ENCODE measurements at regions of chr1 and their contacts with region 1.

Region 1: DNA sequence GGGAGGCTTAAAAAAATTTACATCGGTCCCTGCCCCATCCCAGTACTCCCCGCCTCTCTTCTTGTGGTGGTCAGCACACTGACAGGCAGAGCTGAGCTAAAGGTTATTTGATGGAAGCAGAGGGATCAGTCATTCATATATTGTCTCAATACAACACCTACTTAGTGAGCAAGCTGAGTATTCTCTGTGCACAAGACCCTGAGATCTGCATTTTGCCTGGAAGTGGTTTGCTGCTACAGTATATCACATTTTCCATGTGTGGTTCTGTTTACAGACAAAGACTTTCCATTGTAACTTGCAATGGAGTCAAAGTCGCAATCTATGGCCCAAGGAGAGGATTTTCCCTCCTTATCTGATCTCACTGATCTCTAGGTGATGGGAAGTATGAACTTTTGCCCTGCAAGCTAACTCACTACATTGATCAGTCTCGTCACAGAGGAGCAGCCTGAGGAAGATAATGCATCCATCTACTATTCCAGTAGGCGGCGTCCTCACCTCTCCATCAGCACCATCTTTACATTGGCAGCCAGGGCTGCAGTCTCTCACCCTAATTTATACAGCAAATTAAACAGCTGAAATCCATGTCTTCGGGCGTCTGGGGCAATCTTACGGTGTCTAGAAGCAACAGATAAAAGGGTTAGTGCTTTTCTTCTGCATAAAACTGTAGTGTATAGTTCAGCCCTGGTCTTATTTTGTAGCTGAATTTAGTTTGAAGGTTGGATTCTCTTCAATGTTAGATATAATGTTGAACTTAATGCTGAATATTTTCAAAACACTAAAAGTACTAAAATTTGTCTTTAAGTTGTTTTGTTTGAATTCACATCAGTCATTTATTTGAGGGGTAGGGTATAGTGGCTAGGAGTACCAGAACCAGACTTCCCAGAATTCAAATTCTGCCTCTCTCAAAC is 3.2 kb upstream of the TRAF5 start:
- DNase-seq: peak; percentile 75
- H3K4me3 ChIP-seq: no peak overlapping the region; a peak in 1 of 4 replicates
- H3K27ac ChIP-seq: no peak overlapping the region
- H3K4me1 ChIP-seq: peaks cover 0 to 15% of the 10 kb centered on the region in 2 experiments; a peak in 1 of 4 replicates
- H3K27me3 ChIP-seq: no peaks in the 10 kb centered on the region
- CTCF ChIP-seq: peak; percentile 87
- EP300 ChIP-seq: no peak
- RAD21 ChIP-seq: peak; percentile 94

Region 2: GRCh38 chr1:211309617-211310016 is 13.8 kb before region 1 on chr1:
- CTCF ChIA-PET with region 1: interaction called, 20 read pairs
- POLR2A ChIA-PET with region 1: no interaction called
- DNase-seq: no peak
- H3K4me3 ChIP-seq: no peak overlapping the region
- H3K27ac ChIP-seq: no peak overlapping the region
- H3K4me1 ChIP-seq: peaks cover 0 to 7% of the 10 kb centered on the region in 2 experiments; a peak in 1 of 4 replicates
- H3K27me3 ChIP-seq: no peaks in the 10 kb centered on the region
- CTCF ChIP-seq: no peak
- EP300 ChIP-seq: no peak
- RAD21 ChIP-seq: no peak

Region 3: DNA sequence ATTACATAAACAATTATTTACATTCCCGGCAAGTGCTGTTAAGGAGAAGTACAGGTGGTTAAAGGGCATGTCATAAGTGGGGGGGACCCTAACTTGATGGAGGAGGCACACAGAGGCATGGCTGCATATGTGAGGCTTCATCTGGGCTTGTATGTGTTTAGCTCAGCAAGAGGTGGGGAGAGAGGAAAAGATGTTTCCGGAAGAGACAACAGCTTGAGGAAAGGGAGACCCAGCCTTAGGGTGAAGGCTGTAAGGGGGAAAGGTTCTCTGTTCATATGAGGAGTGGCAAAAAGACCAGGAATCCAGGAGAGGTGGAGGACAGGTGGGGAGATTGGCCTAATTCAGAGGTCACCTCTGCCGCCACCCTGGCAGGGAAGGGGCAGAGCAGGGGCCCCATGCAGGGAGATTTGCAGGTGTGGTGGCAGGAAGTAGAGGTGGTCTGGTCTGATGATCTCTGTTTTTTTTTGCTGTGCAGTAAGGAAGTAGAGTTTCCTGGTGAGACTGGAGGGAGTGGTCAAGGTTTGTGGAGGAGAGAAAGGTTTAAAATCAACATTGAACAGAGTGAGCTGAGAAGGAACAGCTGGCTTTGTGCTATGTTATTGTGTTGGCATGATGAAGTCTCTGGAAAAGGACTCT is 12.2 kb after region 1 on chr1:
- CTCF ChIA-PET with region 1: interaction called, 12 read pairs
- POLR2A ChIA-PET with region 1: no interaction called
- DNase-seq: no peak
- H3K4me3 ChIP-seq: no peak overlapping the region
- H3K27ac ChIP-seq: no peak overlapping the region
- H3K4me1 ChIP-seq: peaks cover 0 to 27% of the 10 kb centered on the region in 2 experiments; a peak in 3 of 4 replicates
- H3K27me3 ChIP-seq: no peaks in the 10 kb centered on the region
- CTCF ChIP-seq: no peak
- EP300 ChIP-seq: no peak
- RAD21 ChIP-seq: no peak

Region 4: GRCh38 chr1:211345719-211346118 is 22.3 kb after region 1 on chr1:
- CTCF ChIA-PET with region 1: interaction called, 10 read pairs
- POLR2A ChIA-PET with region 1: no interaction called
- DNase-seq: no peak
- H3K4me3 ChIP-seq: no peak overlapping the region
- H3K27ac ChIP-seq: peak overlapping the region in 1 of 2 experiments; percentile 7; a peak in 1 of 4 replicates
- H3K4me1 ChIP-seq: peaks cover 5 to 11% of the 10 kb centered on the region in 2 experiments; a peak in 1 of 4 replicates
- H3K27me3 ChIP-seq: no peaks in the 10 kb centered on the region
- CTCF ChIP-seq: no peak
- EP300 ChIP-seq: no peak
- RAD21 ChIP-seq: no peak

Region 5: DNA sequence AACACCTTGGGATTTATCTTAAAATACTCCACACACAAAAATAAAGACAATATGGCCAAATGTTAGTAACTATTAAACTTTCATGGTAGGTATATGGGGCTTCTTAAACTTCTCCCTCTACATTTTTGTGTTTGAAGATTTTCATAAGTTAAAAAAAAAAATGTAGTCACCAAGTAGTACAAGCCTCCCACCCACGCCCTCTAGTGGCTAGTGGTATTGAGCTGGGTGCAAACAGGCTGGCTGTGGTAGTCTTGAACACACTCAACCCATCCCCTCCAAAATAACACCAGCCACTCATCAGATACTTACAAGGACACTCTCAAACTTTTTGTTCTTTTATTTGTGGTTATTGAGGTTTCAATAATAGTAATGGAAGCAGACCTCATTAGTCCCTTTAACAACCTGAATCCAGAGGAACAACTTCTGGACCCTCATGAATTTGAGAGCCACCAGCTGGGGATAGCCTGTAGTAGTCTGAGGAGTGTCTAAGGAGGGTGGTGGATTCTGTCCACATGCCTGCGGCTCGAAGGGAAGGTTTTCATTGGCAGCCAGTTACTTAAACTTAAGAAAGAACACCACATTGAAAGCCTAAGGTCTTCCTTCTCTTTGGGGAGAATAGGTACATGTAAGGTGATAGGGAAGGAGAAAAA is 152.9 kb after region 1 on chr1:
- CTCF ChIA-PET with region 1: interaction called, 17 read pairs
- POLR2A ChIA-PET with region 1: no interaction called
- DNase-seq: peak; percentile 76
- H3K4me3 ChIP-seq: no peak overlapping the region
- H3K27ac ChIP-seq: no peak overlapping the region
- H3K4me1 ChIP-seq: peaks cover 0 to 4% of the 10 kb centered on the region in 2 experiments; a peak in 2 of 4 replicates
- H3K27me3 ChIP-seq: no peaks in the 10 kb centered on the region
- CTCF ChIP-seq: peak; percentile 96
- EP300 ChIP-seq: no peak
- RAD21 ChIP-seq: peak; percentile 64

Region 6: GRCh38 chr1:211492511-211493132 is 169.2 kb after region 1 on chr1:
- CTCF ChIA-PET with region 1: interaction called, 12 read pairs
- POLR2A ChIA-PET with region 1: no interaction called
- DNase-seq: peak; percentile 66
- H3K4me3 ChIP-seq: no peak overlapping the region
- H3K27ac ChIP-seq: peak overlapping the region in 1 of 2 experiments; percentile 98; a peak in 2 of 4 replicates
- H3K4me1 ChIP-seq: peaks cover 0 to 59% of the 10 kb centered on the region in 2 experiments; a peak in 2 of 4 replicates
- H3K27me3 ChIP-seq: no peaks in the 10 kb centered on the region
- CTCF ChIP-seq: no peak
- EP300 ChIP-seq: peak in 1 of 2 experiments; percentile 69; a peak in 2 of 4 replicates
- RAD21 ChIP-seq: no peak

Region 7: DNA sequence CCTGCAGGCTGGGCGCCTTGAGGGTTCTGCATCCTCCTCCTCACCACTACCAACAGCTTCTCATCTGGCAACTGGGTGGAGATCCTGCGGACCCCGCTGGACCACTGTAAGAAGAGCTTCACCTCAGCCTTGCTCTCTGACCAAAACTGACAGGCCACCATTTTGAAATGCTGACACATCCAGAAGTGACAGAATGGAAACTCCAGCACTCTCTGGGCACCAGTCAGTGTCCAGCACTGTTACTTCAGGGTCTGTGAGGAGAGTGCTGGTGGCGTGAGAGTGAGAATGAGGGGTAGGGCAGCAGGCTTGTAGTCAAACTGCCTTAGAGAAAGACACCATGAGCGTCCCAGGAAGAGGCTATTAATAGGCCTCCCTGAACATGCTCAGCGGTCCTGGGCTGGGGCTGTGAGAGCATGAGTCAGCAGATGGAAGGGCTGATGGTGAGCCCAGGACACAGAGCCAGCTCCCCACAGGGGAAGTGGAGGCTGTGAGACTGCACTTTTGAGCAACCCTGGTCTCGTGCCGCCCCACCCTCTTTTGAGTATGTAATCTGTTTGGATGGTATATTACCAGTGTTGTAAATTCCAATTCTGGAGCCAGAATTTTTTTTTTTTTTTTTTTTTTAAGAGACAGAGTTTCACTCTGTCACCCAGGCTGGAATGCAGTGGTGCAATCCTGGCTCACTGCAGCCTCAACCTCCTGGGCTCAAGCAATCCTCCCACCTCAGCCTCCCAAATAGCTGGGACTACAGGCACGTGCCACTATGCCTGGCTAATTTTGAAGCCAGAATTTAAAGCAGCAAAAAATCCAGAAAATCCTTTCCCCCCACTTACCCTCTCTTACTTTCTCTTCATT is 289.9 kb after region 1 on chr1:
- CTCF ChIA-PET with region 1: no interaction called
- POLR2A ChIA-PET with region 1: no interaction called
- DNase-seq: no peak
- H3K4me3 ChIP-seq: no peak overlapping the region
- H3K27ac ChIP-seq: peak overlapping the region; percentile 17 to 81; a peak in 3 of 4 replicates
- H3K4me1 ChIP-seq: peaks cover 0 to 18% of the 10 kb centered on the region in 2 experiments; a peak in 1 of 4 replicates
- H3K27me3 ChIP-seq: no peaks in the 10 kb centered on the region
- CTCF ChIP-seq: no peak
- EP300 ChIP-seq: no peak
- RAD21 ChIP-seq: no peak

Region 8: GRCh38 chr1:211654838-211655787 is 331.7 kb after region 1 on chr1:
- CTCF ChIA-PET with region 1: interaction called, 19 read pairs
- POLR2A ChIA-PET with region 1: no interaction called
- DNase-seq: peak; percentile 83
- H3K4me3 ChIP-seq: no peak overlapping the region; a peak in 1 of 4 replicates
- H3K27ac ChIP-seq: no peak overlapping the region
- H3K4me1 ChIP-seq: peaks cover 0 to 4% of the 10 kb centered on the region in 2 experiments; a peak in 1 of 4 replicates
- H3K27me3 ChIP-seq: no peaks in the 10 kb centered on the region
- CTCF ChIP-seq: peak; percentile 98
- EP300 ChIP-seq: no peak
- RAD21 ChIP-seq: peak; percentile 98